H1 (cell line): ENCODE measurements at regions of chr2 and their contacts with region 1.

Region 1: GRCh38 chr2:42086500-42086953 is 38.7 kb downstream of the PKDCC start:
- DNase-seq: peak in 1 of 2 experiments; percentile 65
- H3K4me3 ChIP-seq: no peak overlapping the region
- H3K27ac ChIP-seq: no peak overlapping the region
- H3K4me1 ChIP-seq: peaks cover 0 to 6% (median under 1%) of the 10 kb centered on the region in 4 experiments; a peak in 3 of 7 replicates
- H3K27me3 ChIP-seq: peaks cover 0 to 5% (median 0%) of the 10 kb centered on the region in 4 experiments; a peak in 4 of 7 replicates
- CTCF ChIP-seq: peak; percentile 26 to 90 (median 75)
- EP300 ChIP-seq: no peak
- POLR2A ChIP-seq: no peak
- RAD21 ChIP-seq: peak; percentile 98 to 99

Region 2: GRCh38 chr2:41840702-41841551 is 245.6 kb before region 1 on chr2:
- CTCF ChIA-PET with region 1: interaction called, 490 read pairs
- POLR2A ChIA-PET with region 1: interaction called, 3 read pairs
- DNase-seq: peak; percentile 95 to 99
- H3K4me3 ChIP-seq: peak overlapping the region; percentile 46 to 84 (median 78)
- H3K27ac ChIP-seq: peak overlapping the region; percentile 17; the same call in 1 of the 2 replicates
- H3K4me1 ChIP-seq: peaks cover 0 to 4% (median 0%) of the 10 kb centered on the region in 4 experiments; a peak in 2 of 7 replicates
- H3K27me3 ChIP-seq: no peaks in the 10 kb centered on the region; a peak in 3 of 7 replicates
- CTCF ChIP-seq: peak; percentile 99
- EP300 ChIP-seq: no peak
- POLR2A ChIP-seq: peak in 1 of 2 experiments; percentile 79; a peak in 2 of 3 replicates
- RAD21 ChIP-seq: peak; percentile 86 to 90

Region 3: DNA sequence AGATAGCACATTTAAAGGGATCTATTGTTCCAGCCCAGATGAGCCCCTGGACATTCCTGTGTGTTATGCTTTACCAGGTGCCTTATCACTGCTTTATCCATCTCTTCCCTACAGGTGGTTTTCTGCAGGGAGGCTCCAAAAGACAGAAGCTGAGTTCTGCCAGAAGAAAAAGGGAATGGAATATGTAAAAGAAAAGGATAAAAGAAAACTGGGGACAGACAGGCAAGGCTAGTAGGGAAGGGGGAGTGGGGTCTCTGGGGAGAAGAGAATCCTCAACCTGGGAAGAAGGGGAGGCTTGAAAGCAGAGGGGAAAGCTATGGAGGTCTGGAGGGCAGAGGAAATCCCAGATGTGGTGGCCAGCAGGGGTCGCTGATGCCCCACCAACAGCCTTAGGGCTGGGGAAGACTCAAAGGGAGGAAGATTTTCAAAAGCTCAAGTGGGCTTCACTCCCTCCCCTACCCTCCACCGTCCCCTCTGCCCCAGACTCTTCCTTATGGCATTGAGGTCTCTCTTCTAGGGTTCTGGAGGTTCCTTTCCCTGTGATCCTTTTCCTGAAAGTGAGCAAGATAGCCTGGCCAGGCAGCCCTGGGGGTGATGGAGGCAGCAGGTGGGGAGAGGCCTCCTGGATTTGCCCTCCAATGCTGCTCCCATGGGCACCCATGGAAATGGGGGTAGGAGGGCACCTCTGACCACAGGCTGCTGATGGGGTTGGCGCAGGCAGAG is 216.8 kb before region 1 on chr2:
- CTCF ChIA-PET with region 1: interaction called, 890 read pairs
- POLR2A ChIA-PET with region 1: interaction called, 4 read pairs
- DNase-seq: peak; percentile 33 to 93
- H3K4me3 ChIP-seq: no peak overlapping the region
- H3K27ac ChIP-seq: no peak overlapping the region
- H3K4me1 ChIP-seq: peaks cover 4 to 18% (median 8%) of the 10 kb centered on the region in 4 experiments; a peak in 6 of 7 replicates
- H3K27me3 ChIP-seq: no peaks in the 10 kb centered on the region
- CTCF ChIP-seq: peak; percentile 87 to 94 (median 90)
- EP300 ChIP-seq: no peak
- POLR2A ChIP-seq: no peak
- RAD21 ChIP-seq: peak; percentile 98 to 99

Region 4: GRCh38 chr2:41966431-41966893 is 120.1 kb before region 1 on chr2:
- CTCF ChIA-PET with region 1: interaction called, 10 read pairs
- POLR2A ChIA-PET with region 1: no interaction called
- DNase-seq: no peak
- H3K4me3 ChIP-seq: no peak overlapping the region
- H3K27ac ChIP-seq: no peak overlapping the region
- H3K4me1 ChIP-seq: peaks cover 0 to 18% (median 11%) of the 10 kb centered on the region in 4 experiments
- H3K27me3 ChIP-seq: no peaks in the 10 kb centered on the region
- CTCF ChIP-seq: no peak
- EP300 ChIP-seq: no peak
- POLR2A ChIP-seq: no peak
- RAD21 ChIP-seq: no peak

Region 5: DNA sequence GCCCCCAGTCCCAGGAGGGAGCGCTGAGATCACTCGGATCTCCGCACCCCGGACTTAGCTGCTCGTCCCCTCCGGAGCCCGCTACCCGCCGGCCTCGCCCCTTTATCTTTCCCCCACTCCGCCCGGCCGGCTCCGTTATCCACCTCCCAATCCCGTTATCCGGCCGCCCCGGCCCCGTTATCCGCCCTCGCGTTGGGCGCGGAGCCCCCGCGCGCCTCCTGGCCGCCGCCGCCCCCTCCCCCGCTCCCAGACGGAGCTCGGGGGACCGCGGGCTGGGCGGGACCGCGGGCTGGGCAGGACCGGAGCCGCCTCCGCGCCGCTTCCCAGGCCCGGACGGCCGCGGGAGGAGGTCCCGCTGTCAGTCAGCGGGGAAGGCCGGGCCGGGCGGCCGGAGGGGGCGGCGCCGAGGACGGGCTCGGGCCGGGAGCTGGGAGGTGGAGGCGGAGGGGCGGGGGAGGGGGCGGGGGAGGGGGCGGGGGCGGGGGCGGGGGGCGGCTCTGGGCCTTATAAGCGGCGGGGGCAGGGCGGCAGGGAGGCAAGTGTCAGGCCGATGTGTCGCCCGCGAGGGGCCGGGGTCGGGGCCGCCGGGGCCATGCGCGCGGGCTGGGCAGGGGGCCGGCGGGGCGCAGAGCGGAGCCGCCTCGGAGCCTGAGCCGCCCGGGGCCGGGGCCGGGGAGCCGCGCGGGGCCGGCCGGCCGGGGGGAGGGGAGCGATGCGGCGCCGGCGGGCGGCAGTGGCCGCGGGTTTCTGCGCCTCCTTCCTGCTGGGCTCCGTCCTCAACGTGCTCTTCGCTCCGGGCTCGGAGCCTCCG is 38.8 kb before region 1 on chr2 and contains the start of gene PKDCC:
- CTCF ChIA-PET with region 1: interaction called, 61 read pairs
- POLR2A ChIA-PET with region 1: interaction called, 3 read pairs
- DNase-seq: peak in 1 of 2 experiments; percentile 88
- H3K4me3 ChIP-seq: peak within 1 kb of the TSS; percentile 74 to 95 (median 80)
- H3K27ac ChIP-seq: peak within 1 kb of the TSS; percentile 86
- H3K4me1 ChIP-seq: peaks cover 16 to 50% (median 37%) of the 10 kb centered on the region in 4 experiments
- H3K27me3 ChIP-seq: peaks cover 0 to 12% (median 10%) of the 10 kb centered on the region in 4 experiments; a peak in 5 of 7 replicates
- CTCF ChIP-seq: no peak
- EP300 ChIP-seq: no peak; a peak in 1 of 3 replicates
- POLR2A ChIP-seq: no peak
- RAD21 ChIP-seq: no peak
- total RNA-seq, gene PKDCC: 48.0 and 49.9 TPM in 2 replicates

Region 6: GRCh38 chr2:42072349-42073118 is 14.0 kb before region 1 on chr2:
- CTCF ChIA-PET with region 1: interaction called, 122 read pairs
- POLR2A ChIA-PET with region 1: interaction called, 4 read pairs
- DNase-seq: no peak
- H3K4me3 ChIP-seq: no peak overlapping the region
- H3K27ac ChIP-seq: no peak overlapping the region
- H3K4me1 ChIP-seq: peaks cover 0 to 9% (median 0%) of the 10 kb centered on the region in 4 experiments; a peak in 3 of 7 replicates
- H3K27me3 ChIP-seq: no peaks in the 10 kb centered on the region
- CTCF ChIP-seq: peak; percentile 9 to 30 (median 19)
- EP300 ChIP-seq: no peak
- POLR2A ChIP-seq: no peak
- RAD21 ChIP-seq: peak in 1 of 2 experiments; percentile 19; a peak in 1 of 4 replicates